ENCODE measurements at regions of chr5 and their contacts with region 1.

Region 1: DNA sequence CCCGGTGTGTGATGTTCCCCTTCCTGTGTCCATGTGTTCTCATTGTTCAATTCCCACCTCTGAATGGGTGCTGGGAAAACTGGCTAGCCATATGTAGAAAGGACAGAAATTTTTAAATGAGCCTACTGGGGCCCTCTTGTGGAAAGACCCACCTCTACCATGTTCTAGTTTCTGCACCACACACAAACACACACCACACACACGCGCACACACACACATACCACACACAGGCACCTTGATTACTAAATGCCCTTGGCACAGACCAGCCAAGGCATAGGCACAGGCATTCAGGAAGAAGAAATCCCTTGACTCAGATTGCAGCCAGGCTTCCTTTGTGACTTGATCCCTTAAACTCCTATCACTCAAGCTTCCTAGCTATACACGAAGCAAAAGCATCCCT is 60.5 kb downstream of the SIL1 start:
- DNase-seq: no peak
- H3K4me3 ChIP-seq: no peak overlapping the region
- H3K27ac ChIP-seq: no peak overlapping the region
- H3K4me1 ChIP-seq: peaks cover 10 to 65% (median 38%) of the 10 kb centered on the region in 3 donors
- H3K27me3 ChIP-seq: no peaks in the 10 kb centered on the region
- CTCF ChIP-seq: peak in 1 of 6 experiments; percentile 30
- POLR2A ChIP-seq: no peak

Region 2: DNA sequence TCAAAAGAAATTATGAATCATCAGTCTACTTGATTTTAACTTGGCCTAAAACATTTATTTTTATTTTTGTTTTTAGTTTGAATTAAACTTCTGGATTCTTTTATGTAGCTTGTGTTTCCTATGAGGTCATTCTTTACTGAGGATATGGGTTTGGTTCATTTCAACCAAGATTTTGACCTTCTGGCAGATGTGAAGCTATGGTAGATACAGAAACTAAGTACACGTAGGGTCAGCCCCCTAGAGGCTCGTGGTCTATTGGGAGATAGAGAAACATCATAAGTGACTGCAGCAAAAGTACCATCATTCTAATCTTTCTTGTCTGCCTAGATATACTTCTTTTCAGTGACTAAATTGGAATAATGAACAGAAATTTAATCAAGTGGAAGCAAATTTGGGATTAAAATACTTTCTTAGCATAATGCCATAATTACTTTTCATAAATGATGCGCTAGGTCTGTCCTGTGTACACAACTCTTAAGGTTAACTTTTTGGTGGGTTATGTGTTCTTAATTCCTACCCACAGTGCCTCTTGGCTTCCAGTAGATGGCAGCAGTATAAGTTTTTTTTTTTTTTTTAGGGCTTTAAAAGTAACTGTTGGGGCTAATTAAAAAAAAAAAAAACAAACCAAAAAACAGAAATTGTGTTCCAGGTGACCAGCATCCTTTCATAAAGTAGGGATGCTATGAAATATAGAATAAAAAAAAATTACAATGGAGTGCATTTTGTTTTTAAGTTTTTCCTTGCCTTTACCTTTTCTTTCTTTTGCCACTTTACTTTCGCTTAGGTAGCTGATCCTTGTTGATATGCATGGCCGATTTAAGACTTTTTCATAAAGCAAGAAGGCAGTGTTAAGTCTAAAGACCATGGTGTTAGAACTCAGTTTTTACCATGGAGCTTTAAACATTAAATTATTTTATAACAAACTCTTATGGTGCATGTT is 312.5 kb before region 1 on chr5:
- intact Hi-C with region 1: loop called (anchors 10 kb)
- DNase-seq: no peak
- H3K4me3 ChIP-seq: no peak overlapping the region
- H3K27ac ChIP-seq: no peak overlapping the region
- H3K4me1 ChIP-seq: peaks cover 0 to 23% (median 0%) of the 10 kb centered on the region in 3 donors
- H3K27me3 ChIP-seq: no peaks in the 10 kb centered on the region
- CTCF ChIP-seq: peak in 4 of 6 experiments; percentile 30 to 64 (median 41)
- POLR2A ChIP-seq: no peak

Region 3: GRCh38 chr5:139282197-139282557 is 144.5 kb after region 1 on chr5:
- intact Hi-C with region 1: no loop called
- DNase-seq: no peak
- H3K4me3 ChIP-seq: no peak overlapping the region
- H3K27ac ChIP-seq: peak overlapping the region in 2 of 4 donors; percentile 52 to 69
- H3K4me1 ChIP-seq: peaks cover 10 to 57% (median 14%) of the 10 kb centered on the region in 3 donors
- H3K27me3 ChIP-seq: no peaks in the 10 kb centered on the region
- CTCF ChIP-seq: no peak
- POLR2A ChIP-seq: no peak